IMR-90 (cell line): ENCODE measurements at regions of chr6 and their contacts with region 1.

Region 1: DNA sequence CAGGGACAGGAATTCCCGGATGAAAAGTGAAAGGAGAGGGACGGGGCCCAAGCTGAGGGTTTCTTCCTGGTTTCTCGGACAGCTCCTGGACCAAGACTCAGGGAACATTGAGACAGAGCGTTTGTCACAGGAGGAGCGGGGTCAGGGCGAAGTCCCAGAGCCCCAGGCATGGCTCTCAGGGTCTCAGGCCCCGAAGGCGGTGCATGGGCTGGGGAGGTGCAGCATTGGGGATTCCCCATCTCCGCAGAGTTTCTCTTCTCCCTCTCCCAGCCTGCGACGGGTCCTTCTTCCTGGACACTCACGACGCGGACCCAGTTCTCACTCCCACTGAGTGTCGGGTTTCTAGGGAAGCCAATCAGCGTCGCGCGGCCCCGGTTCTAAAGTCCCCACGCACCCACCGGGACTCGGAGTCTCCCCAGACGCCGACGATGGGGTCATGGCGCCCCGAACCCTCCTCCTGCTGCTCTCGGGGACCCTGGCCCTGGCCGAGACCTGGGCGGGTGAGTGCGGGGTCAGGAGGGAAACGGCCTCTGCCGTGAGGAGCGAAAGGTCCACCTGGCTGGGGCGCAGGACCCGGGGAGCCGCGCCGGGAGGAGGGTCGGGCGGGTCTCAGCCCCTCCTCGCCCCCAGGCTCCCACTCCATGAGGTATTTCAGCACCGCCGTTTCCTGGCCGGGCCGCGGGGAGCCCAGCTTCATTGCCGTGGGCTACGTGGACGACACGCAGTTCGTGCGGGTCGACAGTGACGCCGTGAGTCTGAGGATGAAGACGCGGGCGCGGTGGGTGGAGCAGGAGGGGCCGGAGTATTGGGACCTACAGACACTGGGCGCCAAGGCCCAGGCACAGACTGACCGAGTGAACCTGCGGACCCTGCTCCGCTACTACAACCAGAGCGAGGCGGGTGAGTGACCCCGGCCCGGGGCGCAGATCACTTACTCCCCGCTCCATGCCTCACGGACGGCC is 54.6 kb upstream of the POLR1H start:
- DNase-seq: peak; percentile 3
- ATAC-seq: peak; percentile 71
- H3K4me3 ChIP-seq: peak overlapping the region; percentile 50
- H3K27ac ChIP-seq: no peak overlapping the region
- H3K4me1 ChIP-seq: no peaks in the 10 kb centered on the region; the same call in 1 of the 2 replicates
- H3K27me3 ChIP-seq: peaks cover 36% of the 10 kb centered on the region
- CTCF ChIP-seq: no peak
- POLR2A ChIP-seq: no peak
- RAD21 ChIP-seq: no peak

Region 2: DNA sequence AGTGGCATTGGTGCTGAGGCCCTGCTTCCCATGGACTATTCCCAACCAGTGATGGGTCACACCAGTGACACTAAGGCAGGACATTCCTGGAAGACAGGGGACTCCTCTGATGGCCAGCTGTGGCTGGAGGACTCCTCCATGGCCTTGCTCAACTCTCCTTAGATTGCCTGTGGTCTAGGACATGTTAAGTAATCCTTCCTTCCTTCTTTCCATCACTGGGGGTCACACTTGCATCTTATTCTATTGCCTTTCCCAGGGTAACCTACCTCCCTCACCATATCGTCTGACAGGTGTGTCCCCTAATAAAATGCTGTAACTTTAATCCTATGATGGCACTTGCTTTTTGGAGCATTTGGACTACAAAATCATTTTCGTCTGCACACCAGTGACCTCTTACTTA is 88.6 kb before region 1 on chr6:
- CTCF ChIA-PET with region 1: no interaction called
- POLR2A ChIA-PET with region 1: no interaction called
- dilution Hi-C with region 1: no loop called
- in situ Hi-C with region 1: loop called (anchors 5 kb)
- intact Hi-C with region 1: no loop called
- DNase-seq: no peak
- ATAC-seq: no peak
- H3K4me3 ChIP-seq: no peak overlapping the region
- H3K27ac ChIP-seq: no peak overlapping the region
- H3K4me1 ChIP-seq: no peaks in the 10 kb centered on the region
- H3K27me3 ChIP-seq: peaks cover 22% of the 10 kb centered on the region
- CTCF ChIP-seq: no peak
- POLR2A ChIP-seq: no peak
- RAD21 ChIP-seq: no peak